ENCODE measurements at regions of chr15 and their contacts with region 1.

Region 1: DNA sequence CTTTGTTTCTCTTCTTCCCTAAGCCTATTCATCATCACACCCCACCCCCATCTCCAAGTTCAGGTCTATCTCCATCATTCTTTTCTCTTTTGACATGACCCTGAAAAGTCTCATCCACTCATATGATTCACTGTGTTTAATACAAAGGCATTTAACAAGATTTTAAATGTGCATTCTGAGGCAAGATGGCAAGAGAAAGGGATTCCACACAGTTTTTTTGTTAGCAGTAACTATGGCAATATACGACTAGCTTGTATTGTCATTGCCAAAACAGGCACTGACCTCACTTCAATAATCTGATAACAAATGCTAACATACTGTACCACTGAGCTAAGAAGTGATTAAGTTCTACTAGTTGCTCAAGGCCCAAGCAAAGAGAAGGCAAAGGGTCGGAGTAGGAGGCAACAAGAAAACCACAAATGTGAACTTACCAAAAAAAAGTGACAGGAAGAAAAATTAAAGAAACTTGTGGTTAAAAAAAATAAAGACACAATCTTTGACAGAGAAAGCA is 53.2 kb downstream of the FBN1 start:
- DNase-seq: no peak
- H3K4me3 ChIP-seq: no peak overlapping the region
- H3K27ac ChIP-seq: no peak overlapping the region
- H3K4me1 ChIP-seq: no peaks in the 10 kb centered on the region
- H3K27me3 ChIP-seq: no peaks in the 10 kb centered on the region
- CTCF ChIP-seq: no peak
- EP300 ChIP-seq: no peak
- POLR2A ChIP-seq: no peak

Region 2: GRCh38 chr15:48493084-48493762 is 99.1 kb before region 1 on chr15:
- in situ Hi-C with region 1: loop called in 1 of 4 experiments (anchors 25 kb)
- intact Hi-C with region 1: no loop called
- DNase-seq: no peak
- H3K4me3 ChIP-seq: no peak overlapping the region
- H3K27ac ChIP-seq: no peak overlapping the region
- H3K4me1 ChIP-seq: no peaks in the 10 kb centered on the region
- H3K27me3 ChIP-seq: no peaks in the 10 kb centered on the region
- CTCF ChIP-seq: no peak
- EP300 ChIP-seq: no peak
- POLR2A ChIP-seq: no peak

Region 3: GRCh38 chr15:48940448-48940893 is 348.2 kb after region 1 on chr15:
- in situ Hi-C with region 1: no loop called
- intact Hi-C with region 1: no loop called
- DNase-seq: no peak
- H3K4me3 ChIP-seq: no peak overlapping the region
- H3K27ac ChIP-seq: no peak overlapping the region
- H3K4me1 ChIP-seq: no peaks in the 10 kb centered on the region
- H3K27me3 ChIP-seq: no peaks in the 10 kb centered on the region
- CTCF ChIP-seq: no peak
- EP300 ChIP-seq: no peak
- POLR2A ChIP-seq: no peak